Lower lobe of right lung (tissue), 2 donors: ENCODE measurements at regions of chr19 and their contacts with region 1.

Region 1: GRCh38 chr19:46913852-46914430 is 53.1 kb downstream of the ARHGAP35 start:
- DNase-seq: no peak
- ATAC-seq: peak; percentile 59 to 67
- H3K4me3 ChIP-seq: no peak overlapping the region
- H3K27ac ChIP-seq: peak overlapping the region; percentile 54
- H3K4me1 ChIP-seq: peaks cover 53% of the 10 kb centered on the region
- H3K27me3 ChIP-seq: no peaks in the 10 kb centered on the region
- CTCF ChIP-seq: no peak

Region 2: DNA sequence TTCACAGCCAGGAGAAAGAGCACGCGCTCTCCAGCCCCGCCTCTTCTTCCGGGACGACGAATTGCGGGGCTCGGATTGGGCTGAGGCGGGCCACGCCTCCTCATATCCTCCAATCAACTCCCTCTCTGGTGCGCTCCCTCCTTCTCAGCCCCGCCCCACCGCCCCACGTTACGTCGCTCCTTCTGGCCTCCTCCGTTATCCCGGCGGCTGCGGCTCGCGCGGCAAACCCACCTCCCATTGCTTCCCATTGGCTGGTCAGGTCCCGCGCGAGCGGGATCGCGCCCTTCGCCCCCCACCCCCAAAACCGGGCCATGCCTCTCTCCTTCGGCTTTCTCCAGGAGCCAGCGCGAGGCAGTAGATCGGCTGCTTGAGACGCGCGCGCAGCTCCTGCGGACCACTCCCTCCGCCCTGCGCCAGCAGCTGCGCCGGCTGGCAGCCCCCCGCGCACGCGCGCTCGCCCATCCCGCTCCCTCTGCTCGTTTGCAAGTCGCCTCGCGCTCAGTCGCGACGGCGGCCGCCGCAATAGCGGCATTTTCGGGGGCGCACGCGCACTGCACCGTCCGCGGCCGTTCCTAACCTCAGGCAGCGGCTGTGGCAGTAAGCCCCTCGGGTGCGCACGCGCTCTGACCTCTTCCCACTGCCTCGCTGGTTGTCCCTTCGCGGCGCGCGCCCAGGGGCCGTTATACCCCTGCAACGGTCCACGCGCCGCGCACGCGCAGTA is 53.7 kb before region 1 on chr19:
- intact Hi-C with region 1: loop called (anchors 10 kb)
- DNase-seq: peak; percentile 98
- ATAC-seq: peak; percentile 91 to 95
- H3K4me3 ChIP-seq: peak overlapping the region; percentile 87
- H3K27ac ChIP-seq: peak overlapping the region; percentile 96
- H3K4me1 ChIP-seq: peaks cover 66% of the 10 kb centered on the region
- H3K27me3 ChIP-seq: no peaks in the 10 kb centered on the region
- CTCF ChIP-seq: peak; percentile 9